CD8-positive, alpha-beta T cell (primary cell): ENCODE measurements at regions of chr12 and their contacts with region 1.

Region 1: DNA sequence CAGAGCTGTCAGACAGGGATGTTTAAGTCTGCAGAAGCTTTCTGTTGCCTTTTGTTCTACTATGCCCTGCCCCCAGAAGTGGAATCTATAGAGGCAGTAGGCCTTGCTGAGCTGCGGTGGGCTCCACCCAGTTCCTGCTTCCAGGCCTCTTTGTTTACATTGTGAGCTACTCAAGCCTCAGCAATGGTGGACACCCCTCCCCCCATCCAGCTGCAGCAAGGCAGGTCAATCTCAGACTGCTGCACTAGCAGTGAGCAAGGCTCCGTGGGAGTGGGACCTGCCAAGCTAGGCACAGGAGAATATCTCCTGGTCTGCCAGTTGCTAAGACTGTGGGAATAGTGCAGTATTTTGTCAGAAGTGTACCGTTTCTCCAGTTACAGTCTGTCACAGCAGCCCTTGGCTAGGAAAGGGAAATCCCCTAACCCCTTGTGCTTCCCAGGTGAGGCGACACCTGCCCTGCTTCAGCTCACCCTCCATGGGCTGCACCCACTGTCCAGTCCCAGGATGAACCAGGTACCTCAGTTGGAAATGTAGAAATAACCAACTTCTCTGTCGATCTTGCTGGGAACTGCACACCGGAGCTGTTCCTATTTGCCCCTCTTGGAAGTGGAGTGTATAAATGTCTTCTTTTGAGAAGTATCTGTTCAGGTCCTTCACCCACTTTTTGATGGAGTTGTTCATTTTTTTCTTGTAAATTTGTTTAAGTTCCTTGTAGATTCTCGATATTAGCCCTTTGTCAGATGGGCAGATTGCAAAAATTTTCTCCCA is 213.5 kb upstream of the SLC38A2 start:
- DNase-seq: peak; percentile 10 to 83 (median 49)
- ATAC-seq: peak; percentile 29
- H3K4me3 ChIP-seq: peak overlapping the region in 1 of 2 experiments; percentile 30
- H3K4me3 Mint-ChIP-seq: peak overlapping the region; percentile 57
- H3K27ac ChIP-seq: peak overlapping the region in 1 of 2 experiments; percentile 13
- H3K27ac Mint-ChIP-seq: peak overlapping the region; percentile 85
- H3K4me1 ChIP-seq: peaks cover 20% of the 10 kb centered on the region
- H3K4me1 Mint-ChIP-seq: peaks cover 51% of the 10 kb centered on the region
- H3K27me3 ChIP-seq: no peaks in the 10 kb centered on the region
- H3K27me3 Mint-ChIP-seq: no peaks in the 10 kb centered on the region
- CTCF ChIP-seq: no peak

Region 2: DNA sequence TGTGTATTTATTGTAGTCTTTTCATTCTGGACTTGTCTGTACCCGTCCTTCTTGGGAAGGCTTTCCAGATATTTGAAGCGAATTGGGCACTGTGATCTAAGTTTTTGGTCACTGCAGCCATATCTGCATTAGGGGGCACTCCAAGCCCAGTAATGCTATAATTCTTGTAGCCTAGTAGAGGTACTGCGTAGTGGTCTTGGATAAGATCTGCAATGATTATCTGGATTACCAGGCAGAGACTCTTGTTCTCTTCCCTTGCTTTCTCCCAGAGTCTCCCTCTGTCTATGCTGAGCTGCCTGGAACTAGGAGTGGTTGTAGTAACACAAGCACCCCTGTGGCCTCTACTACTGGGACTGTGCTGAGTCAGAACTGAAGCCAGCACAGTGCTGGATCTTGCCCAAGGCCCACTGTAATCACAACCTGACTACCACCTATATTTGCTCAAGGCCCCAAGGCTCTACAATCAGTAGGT is 243.4 kb before region 1 on chr12:
- CTCF ChIA-PET with region 1: no interaction called
- POLR2A ChIA-PET with region 1: no interaction called
- intact Hi-C with region 1: no loop called
- DNase-seq: peak in 8 of 9 experiments; percentile 6 to 69 (median 38)
- ATAC-seq: peak; percentile 67
- H3K4me3 ChIP-seq: no peak overlapping the region
- H3K4me3 Mint-ChIP-seq: no peak overlapping the region
- H3K27ac ChIP-seq: no peak overlapping the region
- H3K27ac Mint-ChIP-seq: no peak overlapping the region
- H3K4me1 ChIP-seq: no peaks in the 10 kb centered on the region
- H3K4me1 Mint-ChIP-seq: no peaks in the 10 kb centered on the region
- H3K27me3 ChIP-seq: no peaks in the 10 kb centered on the region
- H3K27me3 Mint-ChIP-seq: peaks cover 2% of the 10 kb centered on the region
- CTCF ChIP-seq: peak; percentile 62

Region 3: DNA sequence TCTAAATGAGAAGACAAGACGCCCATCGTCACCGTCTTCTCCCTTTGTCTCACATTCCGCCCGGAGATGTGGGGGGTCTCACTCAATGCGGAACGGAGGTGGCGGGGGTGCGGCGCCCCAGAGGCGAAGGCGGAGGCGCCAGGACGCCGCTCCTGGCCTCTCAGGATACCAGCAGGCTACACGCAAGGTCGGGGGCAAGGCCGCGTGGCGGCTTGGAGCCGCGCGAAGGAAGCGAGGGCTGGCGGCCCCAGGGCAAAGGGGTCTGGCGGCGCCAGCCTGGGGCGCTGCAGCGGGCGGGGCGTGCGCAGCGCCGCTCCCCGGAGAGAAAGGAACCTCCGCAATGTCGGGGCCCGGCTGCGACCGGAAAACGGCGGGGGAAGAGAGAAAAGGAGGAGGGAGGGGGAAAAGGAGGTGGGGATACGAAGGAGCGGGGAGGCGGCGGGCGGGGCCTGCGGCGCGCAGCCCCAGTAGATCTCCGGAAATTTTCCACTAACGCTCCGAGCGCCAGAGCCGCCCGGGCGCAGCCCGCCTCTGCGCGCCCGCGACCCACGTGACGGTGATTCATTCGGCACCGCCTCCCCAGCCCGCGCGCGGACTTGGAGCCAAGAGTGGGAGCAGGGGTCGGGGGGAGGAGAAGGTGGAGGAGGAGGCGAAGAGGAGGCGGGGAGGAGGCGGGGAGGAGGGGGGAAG is 202.9 kb before region 1 on chr12:
- CTCF ChIA-PET with region 1: no interaction called
- POLR2A ChIA-PET with region 1: no interaction called
- intact Hi-C with region 1: loop called in 1 of 2 experiments (anchors 10 kb)
- DNase-seq: peak; percentile 70 to 97 (median 93)
- ATAC-seq: peak; percentile 76
- H3K4me3 ChIP-seq: peak overlapping the region; percentile 82 to 93
- H3K4me3 Mint-ChIP-seq: peak overlapping the region; percentile 90
- H3K27ac ChIP-seq: peak overlapping the region; percentile 91 to 93
- H3K27ac Mint-ChIP-seq: peak overlapping the region; percentile 96
- H3K4me1 ChIP-seq: peaks cover 38% of the 10 kb centered on the region
- H3K4me1 Mint-ChIP-seq: peaks cover 36% of the 10 kb centered on the region
- H3K27me3 ChIP-seq: no peaks in the 10 kb centered on the region
- H3K27me3 Mint-ChIP-seq: no peaks in the 10 kb centered on the region
- CTCF ChIP-seq: no peak

Region 4: DNA sequence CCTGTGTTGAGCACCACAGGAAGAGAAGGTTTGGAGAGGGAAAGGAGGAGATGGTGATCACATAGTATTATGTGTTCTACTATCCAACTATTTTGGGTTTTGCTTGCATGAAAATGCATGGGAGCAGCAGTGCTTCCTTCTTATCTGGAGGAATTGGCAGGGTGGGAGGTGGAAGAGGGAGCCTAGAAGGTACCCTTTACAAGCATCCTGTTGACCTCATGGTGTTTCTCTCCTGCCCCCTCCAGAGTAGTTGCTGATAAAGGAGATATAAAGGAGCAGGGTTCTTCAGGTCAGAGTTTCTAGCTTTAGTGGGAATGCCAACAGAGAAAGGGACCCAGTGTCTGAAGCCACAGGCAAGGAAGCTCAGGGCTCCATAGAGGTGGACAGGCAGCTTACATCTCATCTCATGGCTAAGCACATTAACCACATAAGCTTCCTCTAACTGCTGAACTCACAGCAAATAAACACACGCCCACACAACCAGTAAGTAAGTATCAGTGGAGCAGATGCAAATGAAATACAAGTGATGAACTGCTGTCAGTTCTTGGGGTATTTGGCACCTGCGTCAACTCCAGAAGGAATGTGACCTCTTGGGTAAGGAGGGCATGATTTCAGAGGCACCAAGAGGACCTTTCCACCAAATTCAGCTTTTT is 39.3 kb before region 1 on chr12:
- CTCF ChIA-PET with region 1: no interaction called
- POLR2A ChIA-PET with region 1: interaction called, 3 read pairs
- intact Hi-C with region 1: loop called in 1 of 2 experiments (anchors 5 kb)
- DNase-seq: peak in 2 of 9 experiments; percentile 15 to 35
- ATAC-seq: no peak
- H3K4me3 ChIP-seq: no peak overlapping the region
- H3K4me3 Mint-ChIP-seq: no peak overlapping the region
- H3K27ac ChIP-seq: peak overlapping the region in 1 of 2 experiments; percentile 42
- H3K27ac Mint-ChIP-seq: peak overlapping the region; percentile 39
- H3K4me1 ChIP-seq: peaks cover 22% of the 10 kb centered on the region
- H3K4me1 Mint-ChIP-seq: peaks cover 47% of the 10 kb centered on the region
- H3K27me3 ChIP-seq: no peaks in the 10 kb centered on the region
- H3K27me3 Mint-ChIP-seq: no peaks in the 10 kb centered on the region
- CTCF ChIP-seq: no peak

Region 5: GRCh38 chr12:46608431-46609272 is 22.6 kb after region 1 on chr12:
- CTCF ChIA-PET with region 1: no interaction called
- POLR2A ChIA-PET with region 1: interaction called, 10 read pairs
- intact Hi-C with region 1: no loop called
- DNase-seq: no peak
- ATAC-seq: no peak
- H3K4me3 ChIP-seq: no peak overlapping the region
- H3K4me3 Mint-ChIP-seq: peak overlapping the region; percentile 58
- H3K27ac ChIP-seq: peak overlapping the region in 1 of 2 experiments; percentile 22
- H3K27ac Mint-ChIP-seq: peak overlapping the region; percentile 65
- H3K4me1 ChIP-seq: peaks cover 30% of the 10 kb centered on the region
- H3K4me1 Mint-ChIP-seq: peaks cover 46% of the 10 kb centered on the region
- H3K27me3 ChIP-seq: no peaks in the 10 kb centered on the region
- H3K27me3 Mint-ChIP-seq: no peaks in the 10 kb centered on the region
- CTCF ChIP-seq: no peak

Region 6: GRCh38 chr12:46629331-46630229 is 43.5 kb after region 1 on chr12:
- CTCF ChIA-PET with region 1: no interaction called
- POLR2A ChIA-PET with region 1: no interaction called
- intact Hi-C with region 1: loop called in 1 of 2 experiments (anchors 10 kb)
- DNase-seq: no peak
- ATAC-seq: no peak
- H3K4me3 ChIP-seq: no peak overlapping the region
- H3K4me3 Mint-ChIP-seq: no peak overlapping the region
- H3K27ac ChIP-seq: no peak overlapping the region
- H3K27ac Mint-ChIP-seq: peak overlapping the region; percentile 11
- H3K4me1 ChIP-seq: no peaks in the 10 kb centered on the region
- H3K4me1 Mint-ChIP-seq: peaks cover 3% of the 10 kb centered on the region
- H3K27me3 ChIP-seq: no peaks in the 10 kb centered on the region
- H3K27me3 Mint-ChIP-seq: no peaks in the 10 kb centered on the region
- CTCF ChIP-seq: no peak